Caco-2 (cell line): ENCODE measurements at regions of chr1 and their contacts with region 1.

Region 1: GRCh38 chr1:24635195-24635843 is 7.8 kb upstream of the SRRM1 start:
- DNase-seq: peak in 1 of 2 experiments; percentile 33
- H3K4me3 ChIP-seq: no peak overlapping the region
- H3K4me3 Mint-ChIP-seq: no peak overlapping the region
- H3K27ac Mint-ChIP-seq: no peak overlapping the region
- H3K4me1 ChIP-seq: peaks cover 11% of the 10 kb centered on the region
- H3K4me1 Mint-ChIP-seq: peaks cover 13% of the 10 kb centered on the region
- H3K27me3 ChIP-seq: no peaks in the 10 kb centered on the region
- H3K27me3 Mint-ChIP-seq: peaks cover 2% of the 10 kb centered on the region
- CTCF ChIP-seq: peak; percentile 36 to 62

Region 2: GRCh38 chr1:24201941-24202440 is 433.3 kb before region 1 on chr1:
- CTCF ChIA-PET with region 1: no interaction called
- POLR2A ChIA-PET with region 1: no interaction called
- intact Hi-C with region 1: loop called (anchors 5 kb)
- DNase-seq: peak; percentile 70 to 73
- H3K4me3 ChIP-seq: no peak overlapping the region
- H3K4me3 Mint-ChIP-seq: no peak overlapping the region
- H3K27ac Mint-ChIP-seq: no peak overlapping the region
- H3K4me1 ChIP-seq: no peaks in the 10 kb centered on the region
- H3K4me1 Mint-ChIP-seq: no peaks in the 10 kb centered on the region
- H3K27me3 ChIP-seq: no peaks in the 10 kb centered on the region
- H3K27me3 Mint-ChIP-seq: no peaks in the 10 kb centered on the region
- CTCF ChIP-seq: peak; percentile 59 to 77

Region 3: DNA sequence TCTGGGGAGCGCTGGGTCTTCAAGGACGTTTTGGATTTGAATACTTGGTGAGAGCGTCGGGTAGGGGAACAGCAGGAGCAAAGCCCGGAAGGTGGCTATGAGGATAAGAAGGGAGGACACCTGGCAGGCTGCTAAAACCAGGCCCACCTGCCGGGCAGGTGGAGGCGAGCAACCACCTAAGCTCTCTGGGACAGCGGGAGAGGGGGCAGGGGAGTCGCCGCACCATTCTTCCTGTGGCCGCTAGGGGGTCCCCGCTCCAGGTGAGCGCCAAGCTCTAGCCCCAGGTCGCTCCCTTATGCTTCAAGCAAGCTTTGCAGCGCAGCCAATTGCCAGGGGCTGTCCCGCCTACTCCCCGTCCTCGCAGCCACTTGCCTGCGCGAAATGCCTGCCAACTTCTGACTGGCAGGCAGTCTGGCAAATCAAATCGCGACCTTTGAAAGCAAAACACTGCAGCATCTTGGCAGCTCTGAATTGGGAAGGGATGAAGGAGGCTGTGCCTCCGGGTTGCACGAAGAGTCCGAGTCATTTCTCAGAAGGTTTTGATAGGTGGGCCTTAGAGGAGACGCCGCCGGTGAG is 219.9 kb before region 1 on chr1 and contains the start of gene NIPAL3:
- CTCF ChIA-PET with region 1: interaction called, 4 read pairs
- POLR2A ChIA-PET with region 1: no interaction called
- intact Hi-C with region 1: loop called (anchors 2 kb)
- DNase-seq: peak; percentile 98
- H3K4me3 ChIP-seq: peak within 1 kb of the TSS; percentile 65
- H3K4me3 Mint-ChIP-seq: peak within 1 kb of the TSS; percentile 96
- H3K27ac Mint-ChIP-seq: peak within 1 kb of the TSS; percentile 94
- H3K4me1 ChIP-seq: peaks cover 15% of the 10 kb centered on the region
- H3K4me1 Mint-ChIP-seq: peaks cover 24% of the 10 kb centered on the region
- H3K27me3 ChIP-seq: no peaks in the 10 kb centered on the region
- H3K27me3 Mint-ChIP-seq: no peaks in the 10 kb centered on the region
- CTCF ChIP-seq: peak; percentile 86 to 89
- total RNA-seq, gene NIPAL3: 9.2 and 9.7 TPM in 2 replicates

Region 4: DNA sequence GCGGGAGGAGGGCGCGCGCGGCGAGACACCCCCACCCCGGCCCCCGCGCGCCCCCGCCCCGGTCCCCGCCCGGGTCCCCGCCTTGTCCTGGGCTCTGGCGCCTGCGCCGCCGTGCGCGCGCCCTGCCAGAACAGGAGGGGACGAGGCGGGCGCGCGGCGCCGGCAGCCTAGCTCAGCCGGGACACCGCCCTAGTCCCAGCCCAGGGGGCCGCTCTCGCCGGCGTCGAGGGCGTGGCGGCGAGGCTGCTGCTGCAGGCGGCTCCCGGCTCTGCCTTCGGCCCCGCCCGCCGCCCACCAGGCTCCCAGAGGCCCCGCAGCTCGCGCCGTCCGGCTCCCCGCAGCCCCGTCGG is 132.6 kb before region 1 on chr1 and contains the start of gene RCAN3:
- CTCF ChIA-PET with region 1: no interaction called
- POLR2A ChIA-PET with region 1: no interaction called
- intact Hi-C with region 1: no loop called
- DNase-seq: peak; percentile 82 to 91
- H3K4me3 ChIP-seq: peak within 1 kb of the TSS; percentile 73
- H3K4me3 Mint-ChIP-seq: peak within 1 kb of the TSS; percentile 84
- H3K27ac Mint-ChIP-seq: peak within 1 kb of the TSS; percentile 83
- H3K4me1 ChIP-seq: peaks cover 5% of the 10 kb centered on the region; the same call in 1 of the 2 replicates
- H3K4me1 Mint-ChIP-seq: peaks cover 7% of the 10 kb centered on the region
- H3K27me3 ChIP-seq: no peaks in the 10 kb centered on the region
- H3K27me3 Mint-ChIP-seq: no peaks in the 10 kb centered on the region
- CTCF ChIP-seq: no peak
- total RNA-seq, gene RCAN3: 9.9 and 10.2 TPM in 2 replicates

Region 5: DNA sequence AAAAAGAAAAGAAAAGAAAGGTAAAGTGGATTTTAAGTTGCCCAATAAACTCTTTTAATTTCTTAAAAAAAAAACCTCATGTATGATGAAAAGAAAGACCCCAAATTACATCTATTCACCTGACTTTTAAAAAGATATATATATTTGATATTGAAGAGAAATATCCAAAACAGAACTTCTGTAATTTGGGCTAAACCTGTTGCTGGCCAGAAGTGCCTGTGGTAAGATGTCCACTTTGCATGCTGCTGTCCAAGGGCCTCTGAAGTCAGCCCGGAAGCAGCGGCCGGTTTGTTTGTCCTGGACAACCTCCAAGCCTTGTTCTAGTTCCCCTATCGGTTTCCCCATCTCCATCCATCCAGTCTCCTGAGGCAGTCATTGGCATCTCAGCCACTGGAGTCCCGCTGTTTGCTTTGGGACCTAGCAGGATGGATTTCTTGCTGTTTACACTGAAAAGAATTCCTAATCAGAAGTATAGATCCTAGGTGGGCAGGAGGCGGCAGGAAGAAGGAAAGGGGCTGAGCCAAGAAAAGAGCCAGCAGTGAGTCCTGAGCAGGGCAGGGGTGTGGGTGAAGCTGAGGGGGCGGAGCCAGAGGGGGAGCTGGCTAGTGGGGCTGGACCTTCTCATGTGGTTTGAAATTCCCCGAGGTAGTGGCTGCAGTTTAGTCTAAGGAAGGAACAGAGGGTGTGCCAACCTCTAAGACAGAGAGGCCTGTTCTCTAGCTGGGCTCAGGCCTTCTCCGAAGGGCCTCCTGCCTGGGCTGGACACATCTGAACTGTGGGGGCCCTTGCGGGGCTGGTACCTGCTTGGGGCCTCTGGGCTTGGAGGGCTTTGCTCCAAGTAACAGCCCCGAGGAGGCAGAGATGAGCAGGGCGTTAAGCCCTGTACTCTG is 76.2 kb before region 1 on chr1:
- CTCF ChIA-PET with region 1: no interaction called
- POLR2A ChIA-PET with region 1: no interaction called
- intact Hi-C with region 1: loop called (anchors 10 kb)
- DNase-seq: no peak
- H3K4me3 ChIP-seq: no peak overlapping the region
- H3K4me3 Mint-ChIP-seq: no peak overlapping the region
- H3K27ac Mint-ChIP-seq: no peak overlapping the region
- H3K4me1 ChIP-seq: no peaks in the 10 kb centered on the region
- H3K4me1 Mint-ChIP-seq: peaks cover 5% of the 10 kb centered on the region
- H3K27me3 ChIP-seq: no peaks in the 10 kb centered on the region
- H3K27me3 Mint-ChIP-seq: no peaks in the 10 kb centered on the region
- CTCF ChIP-seq: no peak

Region 6: GRCh38 chr1:24594154-24594553 is 41.2 kb before region 1 on chr1:
- CTCF ChIA-PET with region 1: interaction called, 5 read pairs
- POLR2A ChIA-PET with region 1: interaction called, 5 read pairs
- intact Hi-C with region 1: loop called (anchors 1 kb)
- DNase-seq: no peak
- H3K4me3 ChIP-seq: no peak overlapping the region
- H3K4me3 Mint-ChIP-seq: no peak overlapping the region
- H3K27ac Mint-ChIP-seq: no peak overlapping the region
- H3K4me1 ChIP-seq: no peaks in the 10 kb centered on the region
- H3K4me1 Mint-ChIP-seq: peaks cover 7% of the 10 kb centered on the region
- H3K27me3 ChIP-seq: no peaks in the 10 kb centered on the region
- H3K27me3 Mint-ChIP-seq: no peaks in the 10 kb centered on the region
- CTCF ChIP-seq: no peak

Region 7: GRCh38 chr1:24872061-24872850 is 236.9 kb after region 1 on chr1:
- CTCF ChIA-PET with region 1: no interaction called
- POLR2A ChIA-PET with region 1: no interaction called
- intact Hi-C with region 1: no loop called
- DNase-seq: no peak
- H3K4me3 ChIP-seq: no peak overlapping the region
- H3K4me3 Mint-ChIP-seq: no peak overlapping the region
- H3K27ac Mint-ChIP-seq: no peak overlapping the region
- H3K4me1 ChIP-seq: no peaks in the 10 kb centered on the region
- H3K4me1 Mint-ChIP-seq: peaks cover 8% of the 10 kb centered on the region
- H3K27me3 ChIP-seq: no peaks in the 10 kb centered on the region
- H3K27me3 Mint-ChIP-seq: no peaks in the 10 kb centered on the region
- CTCF ChIP-seq: no peak